ENCODE measurements at regions of chr5 and their contacts with region 1.

Region 1: DNA sequence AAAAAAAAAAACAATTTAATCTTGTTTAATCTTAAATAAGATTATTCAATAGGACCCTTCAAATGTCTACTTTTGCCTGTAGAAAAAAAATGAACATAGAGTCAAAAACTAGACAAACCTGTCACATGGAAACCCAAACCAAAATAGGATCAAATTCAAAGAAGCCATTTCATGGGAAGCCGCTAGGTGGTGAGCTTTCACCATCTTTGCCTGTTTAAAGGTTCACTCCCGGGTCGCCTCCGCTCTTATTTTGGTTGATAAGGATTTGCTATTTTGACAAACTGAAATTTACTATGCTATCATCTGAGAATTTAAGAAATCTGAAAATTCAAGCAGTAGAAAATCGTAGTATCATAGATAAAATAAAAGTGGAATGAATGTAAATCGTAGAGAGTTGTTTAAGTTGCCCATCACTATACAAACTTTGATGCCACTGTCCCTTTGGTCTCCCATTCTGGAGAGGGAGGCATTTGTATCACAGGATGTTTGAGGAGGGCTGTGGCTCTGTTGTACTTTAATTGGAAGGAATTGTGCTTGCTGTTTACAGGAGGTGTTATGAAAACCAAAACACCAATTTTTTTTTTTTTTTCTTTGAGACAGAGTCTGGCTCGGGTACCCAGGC is 43.5 kb upstream of the DNAH5 start:
- DNase-seq: peak; percentile 66 to 78 (median 74)
- ATAC-seq: peak; percentile 85
- H3K4me3 ChIP-seq: no peak overlapping the region
- H3K27ac ChIP-seq: no peak overlapping the region
- H3K4me1 ChIP-seq: no peaks in the 10 kb centered on the region
- H3K27me3 ChIP-seq: peaks cover 0 to 4% of the 10 kb centered on the region in 2 experiments; a peak in 1 of 5 replicates
- CTCF ChIP-seq: peak; percentile 70 to 95 (median 77)
- EP300 ChIP-seq: no peak
- POLR2A ChIP-seq: no peak
- RAD21 ChIP-seq: peak; percentile 78 to 91

Region 2: DNA sequence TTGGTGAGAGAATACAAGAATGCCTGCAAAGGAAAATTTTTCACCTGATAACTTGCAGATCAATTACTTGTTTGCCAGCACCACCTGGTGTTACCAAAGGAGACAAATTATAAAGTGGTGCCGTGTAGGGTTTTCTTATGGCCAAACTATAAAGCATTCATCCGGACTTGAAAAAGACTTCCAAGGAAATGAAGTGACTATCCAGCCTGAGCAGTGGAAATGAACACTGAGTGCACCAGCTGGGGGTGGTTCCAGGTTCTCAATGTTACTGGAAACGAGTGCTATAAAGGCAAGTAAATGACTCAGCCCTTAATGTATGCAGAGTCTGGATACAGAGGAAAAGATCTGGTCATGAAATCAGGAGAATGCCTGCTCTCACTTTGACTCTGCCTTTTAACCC is 156.6 kb before region 1 on chr5:
- CTCF ChIA-PET with region 1: no interaction called
- POLR2A ChIA-PET with region 1: no interaction called
- in situ Hi-C with region 1: no loop called
- intact Hi-C with region 1: no loop called
- DNase-seq: no peak
- ATAC-seq: no peak
- H3K4me3 ChIP-seq: no peak overlapping the region
- H3K27ac ChIP-seq: no peak overlapping the region
- H3K4me1 ChIP-seq: no peaks in the 10 kb centered on the region
- H3K27me3 ChIP-seq: no peaks in the 10 kb centered on the region
- CTCF ChIP-seq: no peak
- EP300 ChIP-seq: no peak
- POLR2A ChIP-seq: no peak
- RAD21 ChIP-seq: no peak

Region 3: DNA sequence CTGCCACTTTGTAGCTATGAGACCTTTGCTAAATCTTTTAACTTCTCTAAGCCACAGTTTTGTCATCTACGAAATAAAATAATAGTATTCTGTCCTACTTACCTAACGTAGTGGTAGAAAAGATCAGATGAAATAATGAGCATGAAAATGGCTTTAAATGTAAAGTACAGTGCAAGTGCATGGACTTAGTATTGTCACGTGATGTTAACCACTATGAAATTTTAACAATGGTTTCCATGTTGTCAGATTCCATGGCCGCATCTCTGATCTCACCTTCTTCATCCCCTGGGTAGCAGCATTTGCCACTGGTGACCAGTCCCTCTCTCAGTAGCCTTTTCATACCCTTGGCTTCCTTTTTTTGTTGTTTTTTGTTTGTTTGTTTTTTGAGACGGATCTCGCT is 89.4 kb before region 1 on chr5:
- CTCF ChIA-PET with region 1: no interaction called
- POLR2A ChIA-PET with region 1: no interaction called
- in situ Hi-C with region 1: no loop called
- intact Hi-C with region 1: no loop called
- DNase-seq: no peak
- ATAC-seq: no peak
- H3K4me3 ChIP-seq: no peak overlapping the region
- H3K27ac ChIP-seq: no peak overlapping the region
- H3K4me1 ChIP-seq: no peaks in the 10 kb centered on the region
- H3K27me3 ChIP-seq: no peaks in the 10 kb centered on the region
- CTCF ChIP-seq: no peak
- EP300 ChIP-seq: no peak
- POLR2A ChIP-seq: no peak
- RAD21 ChIP-seq: no peak

Region 4: GRCh38 chr5:14108170-14108996 is 120.4 kb after region 1 on chr5:
- CTCF ChIA-PET with region 1: no interaction called
- POLR2A ChIA-PET with region 1: no interaction called
- in situ Hi-C with region 1: no loop called
- intact Hi-C with region 1: loop called (anchors 10 kb)
- DNase-seq: peak; percentile 68 to 81 (median 80)
- ATAC-seq: peak; percentile 97
- H3K4me3 ChIP-seq: no peak overlapping the region
- H3K27ac ChIP-seq: no peak overlapping the region
- H3K4me1 ChIP-seq: no peaks in the 10 kb centered on the region
- H3K27me3 ChIP-seq: peaks cover 0 to 6% of the 10 kb centered on the region in 2 experiments; a peak in 3 of 5 replicates
- CTCF ChIP-seq: peak; percentile 64 to 79 (median 73)
- EP300 ChIP-seq: no peak
- POLR2A ChIP-seq: no peak
- RAD21 ChIP-seq: peak; percentile 44 to 61

Region 5: DNA sequence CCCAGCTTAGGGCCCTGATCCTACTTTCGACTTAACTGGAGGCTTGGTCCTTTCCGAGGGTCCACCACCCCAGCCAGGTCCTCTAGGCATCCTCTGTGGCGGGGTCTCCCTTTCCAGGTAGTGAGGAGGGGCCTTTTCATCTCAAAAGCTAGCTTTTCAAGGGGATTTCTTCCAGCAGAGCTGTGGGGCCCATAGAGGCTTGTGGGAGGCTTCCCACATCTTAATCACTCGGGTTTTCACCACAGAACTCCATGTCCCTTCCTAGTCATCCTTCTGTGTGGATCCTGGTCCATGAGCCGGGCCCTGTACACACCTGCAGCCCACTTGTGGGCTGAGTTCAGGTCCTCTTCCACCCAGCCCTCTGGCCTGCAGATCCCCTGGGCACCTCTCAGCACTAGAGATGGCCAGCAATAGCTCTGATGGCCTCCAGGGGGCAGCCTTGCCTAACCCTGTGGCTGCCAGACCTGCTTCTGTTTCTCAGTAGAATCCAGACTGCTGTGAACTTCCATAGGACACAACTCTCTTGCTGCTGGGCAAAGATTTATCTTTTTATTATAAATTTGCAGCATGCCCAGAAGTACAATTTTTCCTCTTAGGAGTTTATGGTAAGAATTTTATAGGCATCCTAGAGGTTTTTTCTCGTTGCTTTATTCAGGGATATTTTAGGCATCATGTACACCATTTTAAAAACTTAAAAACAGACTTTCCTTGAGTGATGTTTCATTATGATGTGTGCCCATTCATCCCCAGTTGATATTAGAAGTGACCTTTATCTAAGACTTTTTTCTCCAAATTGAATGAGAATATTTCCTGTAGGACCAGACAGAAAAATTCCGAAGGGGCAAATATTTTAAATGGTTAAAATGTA is 364.1 kb after region 1 on chr5:
- CTCF ChIA-PET with region 1: no interaction called
- POLR2A ChIA-PET with region 1: no interaction called
- in situ Hi-C with region 1: loop called (anchors 10 kb)
- intact Hi-C with region 1: no loop called
- DNase-seq: peak; percentile 74 to 85 (median 78)
- ATAC-seq: peak; percentile 99
- H3K4me3 ChIP-seq: no peak overlapping the region
- H3K27ac ChIP-seq: no peak overlapping the region
- H3K4me1 ChIP-seq: no peaks in the 10 kb centered on the region
- H3K27me3 ChIP-seq: peaks cover 8 to 20% of the 10 kb centered on the region in 2 experiments
- CTCF ChIP-seq: peak; percentile 87 to 97 (median 92)
- EP300 ChIP-seq: no peak
- POLR2A ChIP-seq: no peak
- RAD21 ChIP-seq: peak; percentile 67 to 84

Region 6: DNA sequence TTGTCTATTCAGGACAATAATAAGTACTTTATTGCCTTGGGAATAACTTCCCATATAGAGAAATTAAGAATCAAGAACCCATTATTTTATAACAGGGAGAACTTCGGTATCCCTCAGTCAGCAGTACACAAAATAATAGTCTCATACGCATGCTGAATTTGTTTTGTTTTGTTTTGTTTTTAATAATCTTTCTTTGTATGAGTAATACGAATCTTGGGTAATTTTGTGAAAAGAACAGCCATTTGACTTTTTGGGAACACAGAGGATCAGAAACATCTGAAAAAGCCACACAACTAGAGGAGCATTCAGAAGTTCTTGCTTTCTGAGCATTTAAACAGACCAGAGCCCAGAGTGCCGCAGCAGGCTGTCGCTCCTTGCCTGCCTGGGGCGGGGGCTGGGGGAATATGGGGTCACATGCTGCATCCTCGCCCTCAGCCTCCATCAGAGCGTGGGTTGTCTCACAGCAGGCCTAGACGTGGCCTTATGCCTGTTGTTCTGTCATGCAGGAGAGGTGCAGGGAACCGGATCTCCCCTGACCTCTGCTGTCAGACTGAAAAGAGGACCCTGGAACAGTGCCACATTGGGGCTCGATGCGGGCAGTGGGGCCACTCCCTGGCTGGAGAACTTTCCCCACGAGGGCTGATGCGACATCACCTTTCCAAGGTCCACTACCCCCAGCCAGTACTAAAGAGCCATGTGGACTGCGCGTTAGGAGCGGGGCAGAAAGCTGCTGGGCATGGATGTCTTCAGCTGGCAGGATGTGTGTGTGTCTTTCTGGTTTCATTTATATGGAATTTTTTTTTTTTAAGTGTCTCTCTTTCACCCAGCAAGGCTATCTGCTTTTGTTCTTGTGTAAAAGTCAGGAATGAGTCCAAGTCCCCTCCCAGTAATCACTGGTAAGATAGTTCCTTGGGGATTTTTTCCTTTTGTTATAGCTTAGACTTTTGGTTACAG is 460.3 kb after region 1 on chr5:
- CTCF ChIA-PET with region 1: no interaction called
- POLR2A ChIA-PET with region 1: no interaction called
- in situ Hi-C with region 1: no loop called
- intact Hi-C with region 1: no loop called
- DNase-seq: no peak
- ATAC-seq: no peak
- H3K4me3 ChIP-seq: no peak overlapping the region
- H3K27ac ChIP-seq: no peak overlapping the region
- H3K4me1 ChIP-seq: no peaks in the 10 kb centered on the region; a peak in 2 of 5 replicates
- H3K27me3 ChIP-seq: peaks cover 22 to 31% of the 10 kb centered on the region in 2 experiments
- CTCF ChIP-seq: no peak
- EP300 ChIP-seq: no peak
- POLR2A ChIP-seq: no peak
- RAD21 ChIP-seq: no peak

Region 7: GRCh38 chr5:14644623-14645237 is 656.8 kb after region 1 on chr5:
- CTCF ChIA-PET with region 1: interaction called, 5 read pairs
- POLR2A ChIA-PET with region 1: no interaction called
- in situ Hi-C with region 1: loop called (anchors 10 kb)
- intact Hi-C with region 1: loop called (anchors 2 kb)
- DNase-seq: no peak
- ATAC-seq: no peak
- H3K4me3 ChIP-seq: no peak overlapping the region
- H3K27ac ChIP-seq: no peak overlapping the region
- H3K4me1 ChIP-seq: no peaks in the 10 kb centered on the region
- H3K27me3 ChIP-seq: peaks cover 0 to 8% of the 10 kb centered on the region in 2 experiments; a peak in 2 of 5 replicates
- CTCF ChIP-seq: no peak
- EP300 ChIP-seq: no peak
- POLR2A ChIP-seq: no peak
- RAD21 ChIP-seq: no peak

Region 8: DNA sequence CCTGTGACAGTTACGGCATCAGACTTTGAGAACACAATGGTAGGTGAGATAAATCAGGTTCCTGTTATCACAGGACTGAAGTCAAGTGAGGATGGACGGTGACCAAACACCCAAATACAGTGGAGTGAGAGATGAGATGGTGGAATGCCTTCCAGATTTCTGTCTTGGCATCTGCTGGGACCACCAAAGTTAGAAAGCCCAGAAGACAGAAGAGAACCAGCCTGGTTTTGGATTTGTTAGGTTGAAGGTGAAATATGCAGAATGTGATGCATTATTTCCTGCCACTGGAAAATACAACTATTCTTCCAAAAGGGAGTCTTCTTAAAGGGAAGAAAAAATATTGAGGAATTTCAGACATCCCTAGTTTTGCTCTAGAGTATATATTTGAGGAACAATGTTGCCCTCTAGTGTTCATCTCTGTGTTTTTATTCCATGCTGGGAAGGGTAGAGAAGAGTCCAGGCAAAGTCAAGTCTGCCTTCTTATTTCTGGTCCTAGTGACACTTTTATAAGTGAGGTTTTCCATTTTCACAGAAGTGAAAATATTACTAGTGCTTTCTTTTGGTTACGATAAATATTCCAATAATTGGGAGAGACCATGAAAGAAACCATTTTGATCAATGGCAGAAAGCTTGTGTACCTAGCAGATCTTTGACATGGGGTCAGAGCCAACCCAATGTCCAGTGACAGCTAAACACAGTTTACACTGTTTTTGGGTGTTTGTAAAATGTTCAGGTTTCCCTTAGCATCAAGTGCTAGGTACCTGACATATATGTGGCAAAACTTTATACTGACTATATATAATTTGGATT is 1025.9 kb after region 1 on chr5:
- CTCF ChIA-PET with region 1: interaction called, 3 read pairs
- POLR2A ChIA-PET with region 1: no interaction called
- in situ Hi-C with region 1: loop called (anchors 25 kb)
- intact Hi-C with region 1: loop called (anchors 5 kb)
- DNase-seq: peak; percentile 41 to 58 (median 47)
- ATAC-seq: peak; percentile 94
- H3K4me3 ChIP-seq: no peak overlapping the region
- H3K27ac ChIP-seq: no peak overlapping the region
- H3K4me1 ChIP-seq: no peaks in the 10 kb centered on the region; a peak in 1 of 5 replicates
- H3K27me3 ChIP-seq: no peaks in the 10 kb centered on the region
- CTCF ChIP-seq: peak; percentile 45 to 79 (median 63); a peak in 5 of 6 replicates
- EP300 ChIP-seq: no peak
- POLR2A ChIP-seq: no peak
- RAD21 ChIP-seq: peak; percentile 78 to 86

Measured in K562 (cell line).